ENCODE measurements at regions of chr22 and their contacts with region 1.

Region 1: GRCh38 chr22:40346178-40347118 is at the start of gene ADSL:
- DNase-seq: peak; percentile 83 to 92 (median 87)
- H3K4me3 ChIP-seq: peak within 1 kb of the TSS; percentile 66 to 97 (median 88)
- H3K27ac ChIP-seq: peak within 1 kb of the TSS; percentile 72 to 87
- H3K4me1 ChIP-seq: peaks cover 7 to 32% (median 25%) of the 10 kb centered on the region in 4 experiments
- H3K27me3 ChIP-seq: no peaks in the 10 kb centered on the region

Region 2: GRCh38 chr22:40044102-40044869 is 302.2 kb before region 1 on chr22:
- CTCF ChIA-PET with region 1: interaction called, 15 read pairs
- POLR2A ChIA-PET with region 1: no interaction called
- DNase-seq: peak; percentile 100
- H3K4me3 ChIP-seq: peak overlapping the region; percentile 75 to 98 (median 85)
- H3K27ac ChIP-seq: peak overlapping the region; percentile 96 to 97
- H3K4me1 ChIP-seq: peaks cover 14 to 48% (median 39%) of the 10 kb centered on the region in 4 experiments
- H3K27me3 ChIP-seq: no peaks in the 10 kb centered on the region

Region 3: DNA sequence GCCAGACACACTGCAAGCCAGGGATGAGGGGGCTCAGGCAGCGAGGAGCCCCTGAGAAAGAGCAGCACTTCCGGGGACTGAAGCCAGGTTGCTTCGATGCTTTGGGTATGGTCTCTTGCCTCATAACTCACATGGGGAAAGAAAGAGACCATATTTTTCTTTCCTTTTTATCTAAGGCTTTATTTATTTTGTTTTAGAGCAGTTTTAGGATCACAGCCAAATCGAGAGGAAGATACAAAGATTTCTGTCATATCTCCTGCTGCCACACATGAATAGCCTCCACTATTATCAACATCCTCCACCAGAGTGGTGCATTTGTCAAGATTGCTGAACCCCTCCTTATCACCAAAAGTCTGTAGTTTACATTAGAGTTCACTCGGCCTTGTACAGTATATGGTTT is 24.4 kb before region 1 on chr22:
- CTCF ChIA-PET with region 1: interaction called, 50 read pairs
- POLR2A ChIA-PET with region 1: interaction called, 3 read pairs
- DNase-seq: peak; percentile 17 to 59 (median 27)
- H3K4me3 ChIP-seq: no peak overlapping the region
- H3K27ac ChIP-seq: no peak overlapping the region
- H3K4me1 ChIP-seq: peaks cover 0 to 9% (median 1%) of the 10 kb centered on the region in 4 experiments
- H3K27me3 ChIP-seq: no peaks in the 10 kb centered on the region

Region 4: GRCh38 chr22:40326905-40327735 is 19.3 kb before region 1 on chr22:
- CTCF ChIA-PET with region 1: interaction called, 50 read pairs
- POLR2A ChIA-PET with region 1: interaction called, 3 read pairs
- DNase-seq: peak in 2 of 3 donors; percentile 50 to 58
- H3K4me3 ChIP-seq: no peak overlapping the region
- H3K27ac ChIP-seq: peak overlapping the region in 1 of 2 experiments; percentile 35
- H3K4me1 ChIP-seq: peaks cover 14 to 51% (median 22%) of the 10 kb centered on the region in 4 experiments
- H3K27me3 ChIP-seq: no peaks in the 10 kb centered on the region

Region 5: GRCh38 chr22:40477683-40478337 is 131.4 kb after region 1 on chr22:
- CTCF ChIA-PET with region 1: no interaction called
- POLR2A ChIA-PET with region 1: no interaction called
- DNase-seq: peak in 1 of 3 donors; percentile 28
- H3K4me3 ChIP-seq: no peak overlapping the region
- H3K27ac ChIP-seq: no peak overlapping the region
- H3K4me1 ChIP-seq: peaks cover 0 to 33% (median 8%) of the 10 kb centered on the region in 4 experiments
- H3K27me3 ChIP-seq: no peaks in the 10 kb centered on the region

Region 6: DNA sequence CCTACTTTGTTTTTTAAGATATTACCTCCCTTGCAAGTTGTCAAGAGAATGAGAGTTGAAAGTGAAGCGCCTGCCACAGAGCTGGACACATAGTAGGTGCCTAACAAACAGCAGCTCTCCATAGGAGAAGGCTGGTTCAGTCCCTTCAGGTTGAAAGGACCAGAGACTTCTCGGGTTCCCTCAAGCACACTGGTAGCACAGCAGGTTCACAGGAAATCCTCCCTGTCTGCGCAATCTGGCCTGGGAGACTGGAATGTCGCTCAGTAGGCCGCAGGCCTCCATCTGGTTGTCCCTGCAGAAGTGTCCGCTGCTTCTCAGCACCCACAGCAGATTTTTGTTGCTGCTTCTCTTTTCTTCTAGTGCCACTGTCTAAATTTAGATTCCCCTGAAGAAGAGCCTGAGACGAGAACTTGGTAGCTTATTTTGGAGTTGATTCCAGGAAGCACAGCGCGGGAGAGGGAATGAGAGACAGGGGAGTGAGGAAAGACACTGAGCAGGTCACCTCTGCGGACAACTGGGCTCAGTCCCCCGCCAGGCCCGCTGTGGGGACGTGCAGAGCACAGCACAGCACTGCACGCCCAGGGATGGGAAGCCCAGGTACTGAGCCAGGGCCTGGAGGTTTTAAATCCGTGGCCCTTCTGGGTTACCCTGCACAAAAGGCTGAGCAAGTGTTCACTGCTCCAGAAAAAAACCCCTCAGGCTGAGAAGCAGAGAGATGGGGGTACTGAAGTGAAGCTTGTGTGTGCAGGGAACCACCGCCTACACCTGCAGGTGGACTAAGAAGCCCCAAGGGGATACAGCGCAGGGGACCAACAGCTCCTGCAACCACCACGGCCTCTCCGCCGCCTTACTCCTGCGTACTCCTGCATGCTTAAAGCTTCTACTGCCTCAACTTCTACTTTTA is 636.3 kb after region 1 on chr22:
- CTCF ChIA-PET with region 1: no interaction called
- POLR2A ChIA-PET with region 1: no interaction called
- DNase-seq: no peak
- H3K4me3 ChIP-seq: no peak overlapping the region
- H3K27ac ChIP-seq: no peak overlapping the region
- H3K4me1 ChIP-seq: no peaks in the 10 kb centered on the region
- H3K27me3 ChIP-seq: no peaks in the 10 kb centered on the region